Endothelial cell of umbilical vein (primary cell): ENCODE measurements at regions of chr16 and their contacts with region 1.

Region 1: GRCh38 chr16:55605754-55606336 is 39.4 kb downstream of the CAPNS2 start:
- DNase-seq: no peak
- H3K4me3 ChIP-seq: no peak overlapping the region
- H3K27ac ChIP-seq: no peak overlapping the region
- H3K4me1 ChIP-seq: no peaks in the 10 kb centered on the region
- H3K27me3 ChIP-seq: no peaks in the 10 kb centered on the region
- CTCF ChIP-seq: no peak
- POLR2A ChIP-seq: no peak

Region 2: GRCh38 chr16:55543472-55543871 is 62.4 kb before region 1 on chr16:
- CTCF ChIA-PET with region 1: no interaction called
- POLR2A ChIA-PET with region 1: no interaction called
- dilution Hi-C with region 1: no loop called
- intact Hi-C with region 1: no loop called
- DNase-seq: peak; percentile 47
- H3K4me3 ChIP-seq: no peak overlapping the region
- H3K27ac ChIP-seq: no peak overlapping the region
- H3K4me1 ChIP-seq: peaks cover 19% of the 10 kb centered on the region
- H3K27me3 ChIP-seq: no peaks in the 10 kb centered on the region
- CTCF ChIP-seq: no peak
- POLR2A ChIP-seq: no peak

Region 3: DNA sequence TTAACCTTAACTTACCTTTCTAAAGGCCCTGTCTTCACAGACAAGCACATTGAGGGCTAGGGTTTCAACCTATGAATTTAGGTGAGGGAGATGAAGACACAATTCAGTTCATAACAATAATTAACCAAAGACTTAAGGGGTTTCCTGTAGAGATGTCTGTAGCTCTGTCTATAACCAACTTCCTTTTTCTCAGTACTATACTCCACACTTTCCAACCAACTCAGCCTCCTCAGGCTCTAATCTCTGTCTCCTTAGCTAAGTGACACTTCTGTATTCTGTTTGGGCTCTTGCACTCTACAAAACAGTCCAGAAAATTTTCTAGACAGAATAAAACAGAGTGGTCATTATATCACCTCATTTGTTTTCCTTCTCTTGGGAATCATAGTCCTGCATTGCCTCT is 13.5 kb before region 1 on chr16:
- CTCF ChIA-PET with region 1: interaction called, 3 read pairs
- POLR2A ChIA-PET with region 1: no interaction called
- dilution Hi-C with region 1: no loop called
- intact Hi-C with region 1: loop called (anchors 1 kb)
- DNase-seq: no peak
- H3K4me3 ChIP-seq: no peak overlapping the region
- H3K27ac ChIP-seq: no peak overlapping the region
- H3K4me1 ChIP-seq: no peaks in the 10 kb centered on the region
- H3K27me3 ChIP-seq: no peaks in the 10 kb centered on the region
- CTCF ChIP-seq: no peak
- POLR2A ChIP-seq: no peak

Region 4: GRCh38 chr16:55643161-55643970 is 37.5 kb after region 1 on chr16:
- CTCF ChIA-PET with region 1: no interaction called
- POLR2A ChIA-PET with region 1: no interaction called
- dilution Hi-C with region 1: no loop called
- intact Hi-C with region 1: no loop called
- DNase-seq: peak; percentile 33
- H3K4me3 ChIP-seq: no peak overlapping the region
- H3K27ac ChIP-seq: no peak overlapping the region
- H3K4me1 ChIP-seq: no peaks in the 10 kb centered on the region
- H3K27me3 ChIP-seq: peaks cover 5 to 9% of the 10 kb centered on the region in 2 experiments
- CTCF ChIP-seq: peak; percentile 11 to 58
- POLR2A ChIP-seq: no peak